Sciatic nerve (tissue), 2 donors: ENCODE measurements at regions of chr3 and their contacts with region 1.

Region 1: DNA sequence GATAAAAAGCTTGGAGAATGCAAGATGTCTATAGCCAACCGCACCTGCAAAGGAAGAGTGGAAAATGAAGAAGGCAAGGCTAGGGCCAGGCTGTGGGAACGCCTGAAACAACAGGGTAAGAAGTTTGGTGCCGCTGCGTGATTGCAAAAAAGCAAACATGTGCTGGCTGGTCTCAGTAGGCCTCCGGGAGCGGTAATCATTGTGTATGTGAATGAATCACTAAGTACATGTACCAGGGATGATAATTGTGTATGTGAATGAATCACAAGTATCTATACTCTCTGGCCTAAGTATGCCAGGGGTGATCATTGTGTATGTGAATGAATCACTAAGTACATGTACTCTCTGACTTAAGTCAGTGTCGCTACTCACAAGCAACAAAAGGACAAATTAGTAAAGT is 40.3 kb upstream of the PARL start:
- DNase-seq: no peak
- ATAC-seq: no peak

Region 2: DNA sequence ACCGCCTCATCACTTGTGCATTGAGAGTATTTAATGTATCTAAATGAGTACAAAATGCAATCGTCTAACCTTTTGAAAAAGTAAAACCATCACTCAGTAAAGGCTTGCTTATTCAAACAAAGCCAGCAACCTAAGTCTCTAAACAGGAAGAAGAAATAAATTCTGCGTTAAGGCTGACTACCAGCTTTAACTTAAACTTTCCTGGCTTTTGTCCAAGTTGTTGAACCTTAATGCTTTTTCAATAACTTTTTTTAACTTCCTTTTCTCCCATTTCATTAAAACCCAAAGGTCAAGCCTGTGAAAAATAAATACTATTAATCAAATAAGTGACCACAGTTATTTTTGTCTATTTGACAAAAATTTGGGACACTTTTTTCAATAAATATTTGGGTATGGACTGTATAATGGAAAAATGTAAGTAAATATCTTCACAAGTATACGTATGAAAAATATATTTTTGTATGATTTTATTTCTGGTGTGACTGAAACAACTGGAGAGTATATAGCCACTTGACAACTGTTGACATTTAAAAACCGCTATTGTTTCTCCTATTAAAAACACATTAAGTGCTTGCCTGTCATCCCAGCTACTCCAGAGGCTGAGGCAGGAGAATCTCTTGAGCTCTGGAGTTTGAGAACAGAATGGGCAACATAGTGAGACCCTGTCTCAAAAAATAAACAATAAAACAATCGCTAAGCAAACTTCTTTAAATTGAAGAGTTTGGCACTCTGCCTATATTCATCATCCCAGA is 286.7 kb before region 1 on chr3:
- intact Hi-C with region 1: no loop called
- DNase-seq: no peak
- ATAC-seq: no peak

Region 3: GRCh38 chr3:183868796-183869195 is 56.2 kb before region 1 on chr3:
- intact Hi-C with region 1: loop called (anchors 2 kb)
- DNase-seq: no peak
- ATAC-seq: no peak

Region 4: DNA sequence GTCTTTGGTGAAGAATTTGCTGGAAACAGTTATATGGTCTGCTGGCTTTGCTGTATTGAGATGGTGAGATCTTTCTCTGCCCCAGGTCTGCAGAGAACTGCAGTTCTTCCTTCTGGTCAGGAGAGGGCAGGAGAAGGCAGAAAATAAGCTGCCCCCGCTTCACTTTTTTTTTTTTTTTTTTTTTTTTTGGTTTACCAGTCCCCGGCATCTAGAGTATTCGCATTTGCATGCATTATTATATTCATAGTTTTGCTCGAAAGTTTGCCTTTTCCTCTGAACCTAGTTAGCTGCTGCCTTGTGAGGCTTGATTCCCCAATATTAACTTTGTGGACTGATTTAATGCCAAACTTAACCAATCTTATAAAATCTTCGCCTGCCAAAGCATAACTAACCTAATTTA is 29.7 kb before region 1 on chr3:
- intact Hi-C with region 1: no loop called
- DNase-seq: no peak
- ATAC-seq: peak; percentile 78